Activated CD4-positive, alpha-beta T cell treated with anti-CD3 and anti-CD28 coated beads for 36 hours (primary cell): ENCODE measurements at regions of chr1 and their contacts with region 1.

Region 1: DNA sequence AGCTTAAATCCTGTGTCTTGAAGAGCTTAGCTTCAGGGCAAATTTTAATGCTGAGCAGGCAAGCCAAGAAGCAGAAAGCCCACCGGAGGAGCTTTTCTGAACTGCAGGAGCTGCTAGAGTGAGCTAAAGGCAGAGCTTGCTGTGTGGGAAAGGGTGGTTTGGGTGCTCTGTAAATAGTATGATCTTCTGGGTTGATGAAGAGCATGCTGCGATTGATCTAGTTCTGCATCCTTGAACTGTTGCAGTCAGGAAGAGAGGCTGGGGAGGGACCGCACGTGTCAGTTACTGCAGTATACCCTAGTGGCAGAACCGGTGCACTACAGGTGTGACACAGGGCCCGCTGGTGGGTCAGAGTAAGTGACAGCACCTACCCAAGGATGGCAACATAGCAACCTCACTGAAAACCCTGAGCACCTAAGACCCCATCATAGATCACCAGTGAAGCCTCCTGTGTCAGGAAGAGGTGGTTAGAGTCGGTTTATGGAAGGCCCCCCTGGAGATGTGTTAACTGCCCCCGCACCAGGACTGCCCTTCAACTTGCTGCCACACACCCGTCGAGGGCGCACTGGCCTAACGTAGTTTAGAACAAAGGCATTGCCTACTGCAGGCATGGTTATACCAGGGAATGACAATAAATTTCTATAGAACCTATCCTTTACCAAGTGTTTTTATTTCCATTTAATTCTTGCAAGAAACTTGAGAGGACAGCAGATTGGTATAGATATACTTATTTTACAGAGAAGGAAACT is 146.0 kb upstream of the KIAA0040 start:
- DNase-seq: peak; percentile 82
- ATAC-seq: peak; percentile 97
- H3K4me3 Mint-ChIP-seq: no peak overlapping the region
- H3K27ac Mint-ChIP-seq: no peak overlapping the region
- H3K4me1 Mint-ChIP-seq: peaks cover 3% of the 10 kb centered on the region
- H3K27me3 Mint-ChIP-seq: peaks cover 15% of the 10 kb centered on the region

Region 2: GRCh38 chr1:174580801-174581200 is 757.8 kb before region 1 on chr1:
- CTCF ChIA-PET with region 1: no interaction called
- POLR2A ChIA-PET with region 1: no interaction called
- intact Hi-C with region 1: no loop called
- DNase-seq: no peak
- ATAC-seq: no peak
- H3K4me3 Mint-ChIP-seq: no peak overlapping the region
- H3K27ac Mint-ChIP-seq: no peak overlapping the region
- H3K4me1 Mint-ChIP-seq: no peaks in the 10 kb centered on the region
- H3K27me3 Mint-ChIP-seq: no peaks in the 10 kb centered on the region

Region 3: GRCh38 chr1:175287377-175287776 is 51.2 kb before region 1 on chr1:
- CTCF ChIA-PET with region 1: no interaction called
- POLR2A ChIA-PET with region 1: no interaction called
- intact Hi-C with region 1: no loop called
- DNase-seq: peak; percentile 33
- ATAC-seq: peak; percentile 95
- H3K4me3 Mint-ChIP-seq: no peak overlapping the region
- H3K27ac Mint-ChIP-seq: peak overlapping the region; percentile 55
- H3K4me1 Mint-ChIP-seq: peaks cover 15% of the 10 kb centered on the region
- H3K27me3 Mint-ChIP-seq: peaks cover 4% of the 10 kb centered on the region

Region 4: GRCh38 chr1:175353066-175353465 is 14.5 kb after region 1 on chr1:
- CTCF ChIA-PET with region 1: interaction called, 16 read pairs
- POLR2A ChIA-PET with region 1: no interaction called
- intact Hi-C with region 1: no loop called
- DNase-seq: no peak
- ATAC-seq: no peak
- H3K4me3 Mint-ChIP-seq: no peak overlapping the region
- H3K27ac Mint-ChIP-seq: no peak overlapping the region
- H3K4me1 Mint-ChIP-seq: no peaks in the 10 kb centered on the region
- H3K27me3 Mint-ChIP-seq: peaks cover 7% of the 10 kb centered on the region

Region 5: GRCh38 chr1:175390081-175390481 is 51.5 kb after region 1 on chr1:
- CTCF ChIA-PET with region 1: no interaction called
- POLR2A ChIA-PET with region 1: no interaction called
- intact Hi-C with region 1: no loop called
- DNase-seq: no peak
- ATAC-seq: no peak
- H3K4me3 Mint-ChIP-seq: no peak overlapping the region
- H3K27ac Mint-ChIP-seq: no peak overlapping the region
- H3K4me1 Mint-ChIP-seq: no peaks in the 10 kb centered on the region
- H3K27me3 Mint-ChIP-seq: peaks cover 17% of the 10 kb centered on the region